Activated naive CD8-positive, alpha-beta T cell treated with anti-CD3 and anti-CD28 coated beads, Interleukin-2, amount 10 ng/mL, durations not matched to agents 7 days and 5 days (primary cell): ENCODE measurements at regions of chr10 and their contacts with region 1.

Region 1: GRCh38 chr10:132446661-132447194 is 49.7 kb downstream of the PWWP2B start:
- DNase-seq: peak; percentile 79
- ATAC-seq: peak; percentile 63
- H3K4me3 Mint-ChIP-seq: peak overlapping the region; percentile 81
- H3K27ac Mint-ChIP-seq: peak overlapping the region; percentile 97
- H3K4me1 Mint-ChIP-seq: peaks cover 25% of the 10 kb centered on the region
- H3K27me3 Mint-ChIP-seq: no peaks in the 10 kb centered on the region

Region 2: GRCh38 chr10:132388901-132389432 is 57.8 kb before region 1 on chr10:
- POLR2A ChIA-PET with region 1: interaction called, 19 read pairs
- DNase-seq: no peak
- ATAC-seq: no peak
- H3K4me3 Mint-ChIP-seq: no peak overlapping the region
- H3K27ac Mint-ChIP-seq: no peak overlapping the region
- H3K4me1 Mint-ChIP-seq: peaks cover 5% of the 10 kb centered on the region
- H3K27me3 Mint-ChIP-seq: peaks cover 2% of the 10 kb centered on the region

Region 3: DNA sequence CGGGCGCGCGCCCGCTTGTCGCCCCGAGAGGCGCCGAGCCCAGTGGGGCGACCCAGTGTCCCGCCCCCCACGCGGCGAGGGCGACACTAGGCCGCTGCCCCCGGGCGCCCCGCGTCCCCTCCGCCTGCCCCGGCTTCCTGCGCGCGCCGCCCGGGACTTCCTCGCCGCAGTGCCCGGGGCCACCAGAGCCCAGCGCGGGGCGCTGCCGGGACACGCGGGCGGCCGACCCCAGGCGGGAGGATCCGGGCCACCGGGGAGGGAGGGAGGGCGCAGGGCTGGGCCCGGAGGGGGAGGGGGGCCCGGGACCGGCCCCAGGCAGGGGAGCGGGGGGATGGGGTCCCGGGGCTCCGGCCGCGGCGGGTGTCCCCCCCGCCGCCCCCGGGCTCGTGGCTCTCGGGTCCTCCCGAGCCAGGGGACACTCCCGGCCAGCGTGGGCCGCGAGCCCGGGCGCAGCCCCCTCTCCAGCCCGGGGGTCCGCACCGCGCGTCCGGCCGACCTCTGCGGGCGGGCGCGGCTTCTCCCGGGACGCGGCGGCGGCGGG is 50.2 kb before region 1 on chr10:
- POLR2A ChIA-PET with region 1: interaction called, 33 read pairs
- DNase-seq: peak; percentile 84
- ATAC-seq: peak; percentile 78
- H3K4me3 Mint-ChIP-seq: no peak overlapping the region
- H3K27ac Mint-ChIP-seq: no peak overlapping the region
- H3K4me1 Mint-ChIP-seq: peaks cover 6% of the 10 kb centered on the region
- H3K27me3 Mint-ChIP-seq: peaks cover 2% of the 10 kb centered on the region

Region 4: GRCh38 chr10:132421392-132421877 is 25.3 kb before region 1 on chr10:
- POLR2A ChIA-PET with region 1: interaction called, 38 read pairs
- DNase-seq: peak; percentile 58
- ATAC-seq: peak; percentile 69
- H3K4me3 Mint-ChIP-seq: peak overlapping the region; percentile 48
- H3K27ac Mint-ChIP-seq: peak overlapping the region; percentile 73
- H3K4me1 Mint-ChIP-seq: peaks cover 15% of the 10 kb centered on the region
- H3K27me3 Mint-ChIP-seq: no peaks in the 10 kb centered on the region